Posterior vena cava (tissue), 2 donors: ENCODE measurements at regions of chr1 and their contacts with region 1.

Region 1: GRCh38 chr1:60984062-60984799 is 98.1 kb upstream of the NFIA start:
- DNase-seq: peak; percentile 85

Region 2: DNA sequence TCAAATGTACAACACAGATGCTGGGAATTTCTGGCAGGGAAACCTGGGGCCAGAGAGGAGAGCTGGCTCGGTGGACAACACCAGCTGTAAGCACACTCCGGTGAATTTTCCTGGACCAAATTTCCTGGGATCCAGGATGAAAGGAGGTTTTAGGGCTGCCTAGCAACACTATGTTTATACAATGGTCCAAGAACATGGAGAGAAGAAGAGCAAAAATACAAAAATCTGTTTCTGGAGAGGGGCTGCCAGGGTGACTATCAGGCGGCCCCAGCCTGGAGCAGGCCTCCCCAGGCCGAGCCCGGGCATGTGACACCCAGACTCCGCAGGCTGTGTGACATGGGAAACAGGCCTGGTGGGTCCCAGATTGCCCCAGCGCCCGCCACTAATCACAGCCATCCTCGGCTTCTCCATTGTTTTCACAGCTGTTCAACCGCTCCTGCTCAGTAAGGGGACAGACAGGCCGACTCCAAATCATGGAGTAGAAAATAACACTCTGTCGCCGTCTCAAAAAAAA is 237.9 kb before region 1 on chr1:
- intact Hi-C with region 1: loop called in 1 of 2 experiments (anchors 5 kb)
- DNase-seq: no peak

Region 3: GRCh38 chr1:61043010-61043820 is 59.0 kb after region 1 on chr1:
- intact Hi-C with region 1: loop called (anchors 5 kb)
- DNase-seq: peak; percentile 97